ENCODE measurements at regions of chr9 and their contacts with region 1.

Region 1: DNA sequence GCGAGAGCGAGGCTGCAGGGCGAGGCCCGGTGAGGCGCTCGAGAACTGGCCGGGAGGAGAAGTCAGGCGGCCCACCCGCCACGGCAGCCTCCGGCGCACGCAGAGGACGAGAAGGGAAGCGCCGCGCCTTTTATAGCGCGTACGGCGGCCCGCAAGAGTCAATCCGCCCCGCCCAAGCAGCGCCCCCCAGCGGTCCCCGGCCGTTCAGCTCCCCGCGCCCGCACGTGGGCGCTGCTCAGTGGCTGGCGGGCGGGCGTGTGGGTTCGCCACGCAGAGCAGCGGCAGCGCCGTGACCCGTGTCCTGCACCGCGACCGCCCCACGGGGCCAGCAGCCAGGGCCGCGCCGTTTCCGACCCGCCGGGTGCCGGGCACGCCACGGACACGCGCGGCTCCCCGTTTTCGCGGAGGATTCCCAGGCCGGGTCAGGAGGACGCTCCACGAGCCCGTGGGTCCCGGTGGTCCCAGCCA is 14.6 kb downstream of the LCN10 start:
- DNase-seq: peak; percentile 81 to 91
- ATAC-seq: peak; percentile 61 to 70
- H3K4me3 ChIP-seq: peak overlapping the region; percentile 91
- H3K27ac ChIP-seq: peak overlapping the region; percentile 99 to 100
- H3K4me1 ChIP-seq: peaks cover 41% of the 10 kb centered on the region
- CTCF ChIP-seq: peak; percentile 90
- EP300 ChIP-seq: no peak
- POLR2A ChIP-seq: peak; percentile 99
- RAD21 ChIP-seq: 0 out of 5 replicates have a peak, but pooled peaks of 1 of the 2 experiments have one; percentile 19

Region 2: DNA sequence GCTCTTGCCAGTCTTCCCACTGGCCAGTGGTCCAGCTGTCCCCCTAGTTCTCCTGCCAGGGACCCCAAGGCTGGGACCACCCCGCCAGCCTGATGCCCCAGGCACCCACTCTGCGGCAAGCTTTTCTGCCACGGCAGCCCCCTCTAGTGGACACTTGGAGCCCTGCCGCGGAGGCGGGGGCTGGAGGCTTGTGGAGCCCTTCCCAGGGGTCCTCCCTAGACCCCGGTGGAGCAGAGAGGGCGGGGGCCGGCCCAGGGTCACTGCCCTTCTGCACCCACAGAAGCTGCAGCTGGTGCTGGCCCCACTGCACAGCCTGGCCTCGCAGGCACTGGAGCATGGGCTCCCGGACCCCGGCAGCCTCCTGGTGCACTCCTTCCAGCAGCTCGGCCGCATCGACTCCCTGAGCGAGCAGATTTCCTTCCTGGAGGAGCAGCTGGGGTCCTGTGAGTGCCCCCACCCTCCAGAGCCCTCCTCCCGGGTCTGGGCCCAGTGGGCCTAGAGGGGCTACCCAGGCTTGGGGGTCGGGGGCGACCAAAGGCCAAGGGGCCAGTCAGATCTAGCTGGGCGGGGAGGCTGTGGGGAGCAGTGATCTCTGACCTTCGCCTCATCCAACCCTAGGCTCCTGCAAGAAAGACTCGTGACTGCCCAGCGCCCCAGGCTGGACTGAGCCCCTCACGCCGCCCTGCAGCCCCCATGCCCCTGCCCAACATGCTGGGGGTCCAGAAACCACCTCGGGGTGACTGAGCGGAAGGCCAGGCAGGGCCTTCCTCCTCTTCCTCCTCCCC is 56.3 kb before region 1 on chr9:
- CTCF ChIA-PET with region 1: interaction called, 11 read pairs
- POLR2A ChIA-PET with region 1: interaction called, 3 read pairs
- DNase-seq: peak in 1 of 2 experiments; percentile 78
- ATAC-seq: peak in 1 of 2 experiments; percentile 63; a peak in 3 of 6 replicates
- H3K4me3 ChIP-seq: no peak overlapping the region
- H3K27ac ChIP-seq: peak overlapping the region in 1 of 2 experiments; percentile 47; a peak in 1 of 6 replicates
- H3K4me1 ChIP-seq: peaks cover 48% of the 10 kb centered on the region
- CTCF ChIP-seq: peak; percentile 66
- EP300 ChIP-seq: no peak
- POLR2A ChIP-seq: no peak
- RAD21 ChIP-seq: peak; percentile 27 to 31; a peak in 3 of 5 replicates

Region 3: GRCh38 chr9:136711751-136712689 is 16.1 kb before region 1 on chr9 and contains the start of gene DIPK1B:
- CTCF ChIA-PET with region 1: interaction called, 37 read pairs
- POLR2A ChIA-PET with region 1: interaction called, 30 read pairs
- DNase-seq: no peak
- ATAC-seq: peak; percentile 23 to 55; a peak in 5 of 6 replicates
- H3K4me3 ChIP-seq: peak within 1 kb of the TSS; percentile 66
- H3K27ac ChIP-seq: peak within 1 kb of the TSS; percentile 83 to 91
- H3K4me1 ChIP-seq: peaks cover 32% of the 10 kb centered on the region
- CTCF ChIP-seq: no peak
- EP300 ChIP-seq: no peak
- POLR2A ChIP-seq: no peak; the same call in 1 of the 2 replicates
- RAD21 ChIP-seq: no peak
- polyA plus RNA-seq, gene DIPK1B: 6.7 and 8.8 TPM in 2 replicates

Region 4: GRCh38 chr9:136757328-136757727 is 29.2 kb after region 1 on chr9:
- CTCF ChIA-PET with region 1: interaction called, 42 read pairs
- POLR2A ChIA-PET with region 1: no interaction called
- DNase-seq: no peak
- ATAC-seq: no peak
- H3K4me3 ChIP-seq: no peak overlapping the region
- H3K27ac ChIP-seq: no peak overlapping the region
- H3K4me1 ChIP-seq: peaks cover 4% of the 10 kb centered on the region; the same call in 2 of the 3 replicates
- CTCF ChIP-seq: no peak
- EP300 ChIP-seq: no peak
- POLR2A ChIP-seq: no peak
- RAD21 ChIP-seq: no peak

Region 5: DNA sequence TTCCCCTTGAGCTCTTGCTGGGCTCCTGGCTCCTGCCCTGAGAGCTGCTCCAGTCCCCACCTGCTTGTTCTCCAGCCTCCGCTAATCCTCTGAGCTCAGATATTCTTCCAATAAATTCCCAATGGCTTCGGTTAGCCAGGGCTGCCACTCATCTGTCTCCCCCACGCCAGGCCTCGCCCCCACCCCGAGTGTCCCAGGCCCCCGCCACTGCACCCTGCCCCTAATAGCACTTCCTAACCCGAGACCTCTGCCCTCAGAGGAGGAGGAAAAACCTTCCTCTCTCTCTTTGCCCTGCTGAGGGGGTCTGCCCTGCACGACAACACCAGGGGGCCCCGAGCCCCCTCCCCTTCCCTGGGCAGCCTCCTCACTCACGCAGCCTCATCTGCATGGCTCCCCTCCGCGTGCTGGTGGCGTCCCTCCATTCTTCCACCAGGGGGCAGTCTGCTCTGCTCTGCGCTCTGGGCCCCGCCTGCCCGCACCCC is 41.6 kb after region 1 on chr9:
- CTCF ChIA-PET with region 1: interaction called, 26 read pairs
- POLR2A ChIA-PET with region 1: no interaction called
- DNase-seq: peak; percentile 58 to 72
- ATAC-seq: peak; percentile 87 to 89
- H3K4me3 ChIP-seq: peak overlapping the region; percentile 31
- H3K27ac ChIP-seq: peak overlapping the region; percentile 54 to 85; a peak in 5 of 6 replicates
- H3K4me1 ChIP-seq: 0 out of 3 replicates have a peak, but pooled peaks cover 8% of the 10 kb centered on the region
- CTCF ChIP-seq: peak; percentile 56
- EP300 ChIP-seq: no peak
- POLR2A ChIP-seq: no peak
- RAD21 ChIP-seq: peak in 1 of 2 experiments; percentile 34; a peak in 3 of 5 replicates

Region 6: DNA sequence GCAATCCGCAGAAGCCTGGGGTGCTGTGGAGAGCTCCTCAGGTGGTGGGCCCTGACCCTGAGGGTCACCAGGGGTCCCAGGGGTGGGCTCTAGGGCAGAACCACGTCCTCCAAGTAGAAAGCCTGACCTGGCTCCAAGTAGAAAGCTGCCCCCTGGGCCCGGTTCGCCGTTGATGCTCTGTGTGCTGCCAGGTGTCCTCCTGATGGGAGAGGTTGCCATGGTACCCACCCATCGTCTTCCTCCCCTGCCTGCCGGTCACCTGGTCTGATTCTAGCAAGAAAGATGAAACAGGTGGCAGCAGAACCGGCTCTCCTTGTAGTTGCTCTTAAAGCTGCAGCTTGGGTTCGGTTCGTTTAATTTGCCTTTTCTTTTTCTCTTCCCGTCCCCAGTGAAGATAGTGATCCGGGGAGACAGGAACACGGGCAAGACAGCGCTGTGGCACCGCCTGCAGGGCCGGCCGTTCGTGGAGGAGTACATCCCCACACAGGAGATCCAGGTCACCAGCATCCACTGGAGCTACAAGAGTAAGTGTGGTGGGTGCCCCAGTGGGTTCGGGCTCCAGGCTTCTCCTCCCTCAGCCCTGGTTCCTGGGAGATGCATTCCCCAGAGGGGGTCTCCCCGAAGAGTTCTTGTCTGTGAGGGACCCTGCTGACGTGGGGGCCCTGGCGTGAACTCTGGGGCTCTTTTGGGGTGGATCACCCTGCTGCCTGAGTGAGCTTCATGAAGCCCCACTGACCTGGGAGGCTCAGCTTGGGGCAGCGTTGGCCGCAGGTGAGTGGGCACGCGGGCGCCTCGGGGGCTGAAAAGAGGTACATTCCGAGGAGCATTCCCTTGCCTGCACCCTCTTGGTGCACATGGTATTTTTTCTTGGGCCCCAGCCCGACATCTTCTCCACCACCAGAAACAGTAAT is 95.3 kb after region 1 on chr9:
- CTCF ChIA-PET with region 1: no interaction called
- POLR2A ChIA-PET with region 1: no interaction called
- DNase-seq: no peak
- ATAC-seq: no peak
- H3K4me3 ChIP-seq: no peak overlapping the region
- H3K27ac ChIP-seq: no peak overlapping the region
- H3K4me1 ChIP-seq: no peaks in the 10 kb centered on the region
- CTCF ChIP-seq: no peak
- EP300 ChIP-seq: no peak
- POLR2A ChIP-seq: no peak
- RAD21 ChIP-seq: no peak